ENCODE measurements at regions of chr2 and their contacts with region 1.

Region 1: DNA sequence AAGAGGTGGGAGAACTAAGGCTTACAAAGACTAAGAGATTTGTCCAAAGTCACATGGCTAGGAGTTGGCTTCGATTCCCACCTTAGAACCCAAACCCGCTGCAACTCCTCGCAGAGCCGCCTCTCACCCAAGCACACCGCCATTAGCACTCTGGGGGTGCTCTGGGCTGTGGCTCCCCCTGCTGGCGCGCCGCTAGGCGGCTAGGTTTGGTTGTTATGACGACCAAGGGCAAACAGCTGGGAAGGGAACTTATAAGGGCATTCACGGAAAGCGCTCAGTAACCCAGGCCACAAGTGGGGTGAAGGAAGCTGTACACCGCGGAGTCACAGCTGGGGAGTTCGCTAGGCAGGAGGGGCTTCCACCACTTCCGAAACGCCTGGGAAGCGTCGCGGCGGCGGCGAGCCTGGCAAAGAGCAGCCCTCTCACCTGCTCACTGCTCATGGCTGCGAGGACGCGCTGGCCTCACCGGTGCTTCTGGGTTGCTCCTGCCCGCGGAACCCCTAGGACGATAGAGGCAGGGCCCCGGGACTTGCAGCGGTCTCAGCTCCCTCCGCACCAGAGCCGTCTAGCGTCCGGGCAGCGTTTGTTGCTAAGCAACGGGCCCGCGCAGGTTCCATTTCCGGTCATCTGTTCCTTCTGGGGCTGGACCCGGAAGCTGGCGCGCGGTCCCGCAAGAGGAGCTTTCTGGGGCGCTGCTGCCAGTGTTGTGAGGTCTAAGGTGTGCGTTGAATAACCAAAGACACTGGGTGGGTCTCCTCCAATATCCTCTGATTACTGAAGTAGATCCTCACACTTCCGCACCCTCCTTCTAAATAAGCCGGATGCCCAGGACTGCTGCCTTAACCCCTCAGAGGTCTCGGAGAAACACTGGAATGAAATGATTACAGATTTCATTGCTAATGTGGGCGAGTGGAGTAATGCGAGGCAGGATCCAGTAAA is at the start of gene DNAH7:
- DNase-seq: peak; percentile 89
- H3K4me3 Mint-ChIP-seq: peak within 1 kb of the TSS; percentile 85
- H3K27ac Mint-ChIP-seq: peak within 1 kb of the TSS; percentile 69
- H3K4me1 Mint-ChIP-seq: peaks cover 3% of the 10 kb centered on the region
- H3K27me3 Mint-ChIP-seq: peaks cover 15% of the 10 kb centered on the region
- total RNA-seq, gene DNAH7: not detected in 2 replicates

Region 2: DNA sequence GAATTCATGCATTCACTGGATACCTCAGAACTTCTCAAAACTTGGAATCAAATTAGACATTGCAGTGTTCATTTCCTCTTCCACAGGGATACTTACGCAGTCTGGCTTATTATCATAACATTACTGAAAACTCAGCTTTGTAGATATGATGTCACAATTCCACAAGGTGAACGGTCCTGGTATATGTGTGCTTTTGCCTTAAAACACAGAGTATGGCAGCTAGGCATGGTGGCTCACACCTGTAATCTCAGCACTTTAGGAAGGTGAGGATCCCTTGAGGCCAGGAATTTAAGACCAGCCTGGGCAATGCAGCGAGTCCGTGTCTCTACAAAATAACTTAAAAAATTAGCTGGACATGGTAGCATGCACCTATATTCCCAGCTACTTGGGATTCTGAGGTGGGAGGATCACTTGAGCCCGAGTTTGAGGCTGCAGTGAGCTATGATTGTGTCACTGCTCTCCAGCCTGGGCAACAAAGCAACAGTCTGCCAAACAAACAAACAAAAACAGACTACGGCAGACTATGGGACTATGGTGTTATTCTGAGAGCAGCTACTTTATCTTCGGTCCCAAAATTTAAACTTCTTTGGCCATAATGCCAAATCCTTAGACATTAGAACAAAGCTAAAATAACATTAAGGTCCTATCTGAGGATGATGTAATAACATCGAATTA is 1603.4 kb before region 1 on chr2:
- intact Hi-C with region 1: loop called (anchors 10 kb)
- DNase-seq: peak; percentile 8
- H3K4me3 Mint-ChIP-seq: no peak overlapping the region
- H3K27ac Mint-ChIP-seq: no peak overlapping the region
- H3K4me1 Mint-ChIP-seq: no peaks in the 10 kb centered on the region
- H3K27me3 Mint-ChIP-seq: no peaks in the 10 kb centered on the region

Region 3: GRCh38 chr2:194545978-194546377 is 1522.6 kb before region 1 on chr2:
- intact Hi-C with region 1: loop called (anchors 2 kb)
- DNase-seq: no peak
- H3K4me3 Mint-ChIP-seq: no peak overlapping the region
- H3K27ac Mint-ChIP-seq: no peak overlapping the region
- H3K4me1 Mint-ChIP-seq: no peaks in the 10 kb centered on the region
- H3K27me3 Mint-ChIP-seq: no peaks in the 10 kb centered on the region

Region 4: DNA sequence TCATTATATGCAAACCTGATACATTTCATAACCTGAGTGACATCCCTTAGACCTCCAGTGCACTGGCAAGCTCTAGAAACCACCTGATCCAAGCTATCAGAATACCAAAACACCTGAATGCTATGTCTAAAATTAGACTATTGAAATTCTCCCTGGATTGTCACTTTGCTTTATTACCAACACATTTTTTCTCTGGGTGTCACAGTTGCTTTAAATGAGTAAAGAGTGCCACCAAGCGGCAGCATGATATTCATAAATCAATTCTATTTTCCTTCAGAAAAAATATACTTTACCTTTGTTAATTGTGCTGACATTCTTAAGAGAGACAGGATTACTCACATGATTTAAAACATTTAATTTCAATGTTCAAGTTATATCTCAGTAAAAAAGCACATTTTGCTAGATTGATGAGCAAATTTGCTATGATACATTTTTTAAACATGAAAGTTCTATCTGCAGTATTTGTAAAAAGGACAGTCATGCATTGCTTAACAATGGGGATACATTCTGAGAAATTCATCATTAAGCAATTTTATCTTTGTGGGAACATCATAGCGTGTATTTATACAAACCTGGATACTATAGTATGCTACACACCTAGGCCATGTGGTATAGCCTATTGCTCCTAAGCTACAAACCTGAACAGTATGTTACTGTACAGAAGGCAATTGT is 750.0 kb before region 1 on chr2:
- intact Hi-C with region 1: loop called (anchors 10 kb)
- DNase-seq: peak; percentile 16
- H3K4me3 Mint-ChIP-seq: no peak overlapping the region
- H3K27ac Mint-ChIP-seq: no peak overlapping the region
- H3K4me1 Mint-ChIP-seq: peaks cover 19% of the 10 kb centered on the region
- H3K27me3 Mint-ChIP-seq: no peaks in the 10 kb centered on the region

Region 5: DNA sequence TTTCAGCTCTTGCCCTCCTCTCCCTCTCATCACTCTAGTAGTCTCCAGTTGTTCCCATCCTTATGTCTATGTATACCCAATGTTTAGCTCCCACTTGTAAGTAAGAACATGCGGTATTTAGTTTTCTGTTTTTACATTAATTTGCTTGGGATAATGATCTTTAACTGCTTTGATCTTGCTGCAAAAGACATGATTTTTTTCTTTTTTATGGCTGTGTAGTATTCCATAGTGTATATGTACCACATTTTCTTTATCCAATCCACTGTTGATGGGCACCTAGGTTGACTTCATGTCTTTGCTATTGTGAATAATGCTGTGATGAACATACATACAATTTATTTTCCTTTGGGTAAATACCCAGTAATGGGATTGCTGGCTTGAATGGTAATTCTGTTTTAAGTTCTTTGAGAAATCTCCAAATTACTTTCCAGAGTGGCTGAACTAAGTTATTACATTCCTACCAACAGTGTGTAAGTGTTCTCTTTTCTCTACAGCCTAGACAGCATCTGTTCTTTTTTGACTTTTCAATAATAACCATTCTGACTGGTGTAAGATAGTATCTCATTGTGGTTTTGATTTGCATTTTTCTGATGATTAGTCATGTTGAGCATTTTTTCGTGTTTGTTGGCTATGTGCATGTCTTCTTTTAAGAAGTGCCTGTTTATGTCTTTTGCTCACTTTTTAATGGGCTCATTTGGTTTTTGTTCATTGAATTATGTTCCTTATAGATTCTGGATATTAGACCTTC is 591.1 kb before region 1 on chr2:
- intact Hi-C with region 1: loop called (anchors 10 kb)
- DNase-seq: no peak
- H3K4me3 Mint-ChIP-seq: no peak overlapping the region
- H3K27ac Mint-ChIP-seq: peak overlapping the region; percentile 33
- H3K4me1 Mint-ChIP-seq: peaks cover 49% of the 10 kb centered on the region
- H3K27me3 Mint-ChIP-seq: no peaks in the 10 kb centered on the region

Region 6: DNA sequence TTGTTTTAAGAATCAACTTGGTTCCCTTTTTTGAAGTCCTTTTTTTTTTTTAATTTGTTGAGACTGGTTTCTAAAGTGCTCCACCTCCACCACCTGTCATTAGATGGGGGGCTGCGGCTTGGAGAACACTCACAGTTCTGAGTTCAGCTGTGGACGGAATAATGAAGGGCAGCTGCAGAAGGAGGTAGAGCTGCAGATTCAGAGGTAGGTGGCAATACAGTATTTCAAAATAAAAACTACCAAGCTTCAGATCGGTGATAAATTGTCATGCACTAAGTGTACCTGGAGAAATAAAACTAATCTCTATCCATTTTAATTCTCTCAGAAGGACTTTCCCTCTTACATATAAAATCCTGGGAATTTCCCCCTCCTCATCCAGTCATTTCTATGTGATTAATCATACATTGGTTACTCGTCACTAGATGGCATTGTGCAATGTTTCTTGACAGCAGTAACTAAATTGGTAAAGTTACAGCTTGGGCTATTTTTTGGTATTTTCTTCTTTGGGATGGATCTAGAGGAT is 492.6 kb before region 1 on chr2:
- intact Hi-C with region 1: loop called (anchors 10 kb)
- DNase-seq: no peak
- H3K4me3 Mint-ChIP-seq: no peak overlapping the region
- H3K27ac Mint-ChIP-seq: no peak overlapping the region
- H3K4me1 Mint-ChIP-seq: peaks cover 49% of the 10 kb centered on the region
- H3K27me3 Mint-ChIP-seq: no peaks in the 10 kb centered on the region

Measured in activated T-helper 2 cell treated with anti-CD3 and anti-CD28 coated beads, Interferon-gamma antibody, Interleukin-2, Interleukin-4, amounts not matched to agents 10 μg/mL and 5 μg/mL and 100 μg/mL, durations not matched to agents 14 hours and 24 hours and 36 hours (primary cell).